ENCODE measurements at regions of chr15 and their contacts with region 1.

Region 1: DNA sequence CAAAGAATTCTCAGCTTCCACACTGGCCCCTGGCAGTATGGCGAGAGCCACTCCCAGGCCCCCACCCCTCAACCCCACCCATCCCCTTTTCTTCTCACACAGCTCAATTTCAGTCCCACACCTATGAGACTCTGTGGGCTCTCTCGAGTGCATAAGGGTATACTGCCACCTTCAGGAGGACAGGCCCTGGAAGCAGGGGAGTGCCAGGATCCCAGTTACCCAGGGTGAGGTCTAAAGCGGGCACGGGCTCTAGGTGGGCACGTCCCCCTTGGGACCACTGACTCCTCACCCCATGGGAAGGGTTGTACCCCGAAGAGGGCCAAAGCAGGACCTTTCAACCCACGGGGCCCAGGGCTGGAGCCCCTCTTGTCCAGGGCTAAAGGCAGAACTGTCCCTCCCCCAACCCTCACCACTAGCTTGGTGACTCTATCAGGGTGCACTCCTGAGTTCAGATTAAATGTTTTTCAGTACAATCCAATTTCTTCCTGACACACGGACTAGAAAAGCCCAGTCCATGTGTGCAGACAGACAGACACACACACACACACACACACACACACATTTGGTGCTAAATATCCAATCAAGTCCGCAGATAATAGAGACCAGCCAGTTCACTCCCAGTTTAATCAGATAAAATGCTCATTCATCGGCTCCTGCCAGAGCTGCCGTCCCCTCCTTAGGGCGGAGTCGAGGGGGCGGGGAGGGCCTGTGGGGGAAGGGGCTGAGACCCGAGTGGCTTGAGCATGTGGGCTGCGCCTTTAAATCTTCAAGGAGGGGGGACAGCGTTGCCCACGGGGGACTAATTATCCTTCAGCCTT is 59.4 kb downstream of the CYP11A1 start:
- DNase-seq: peak; percentile 61 to 83
- ATAC-seq: peak; percentile 88 to 94
- H3K4me3 ChIP-seq: no peak overlapping the region
- H3K27ac ChIP-seq: peak overlapping the region in 1 of 2 experiments; percentile 62; a peak in 2 of 6 replicates
- H3K4me1 ChIP-seq: peaks cover 18% of the 10 kb centered on the region
- CTCF ChIP-seq: peak; percentile 67
- EP300 ChIP-seq: no peak
- POLR2A ChIP-seq: no peak
- RAD21 ChIP-seq: peak; percentile 85 to 87

Region 2: GRCh38 chr15:74127260-74127953 is 180.6 kb before region 1 on chr15:
- CTCF ChIA-PET with region 1: interaction called, 38 read pairs
- POLR2A ChIA-PET with region 1: no interaction called
- DNase-seq: peak; percentile 52 to 86
- ATAC-seq: peak; percentile 88 to 96
- H3K4me3 ChIP-seq: peak overlapping the region; percentile 50
- H3K27ac ChIP-seq: peak overlapping the region; percentile 64 to 85
- H3K4me1 ChIP-seq: peaks cover 20% of the 10 kb centered on the region; the same call in 2 of the 3 replicates
- CTCF ChIP-seq: peak; percentile 93
- EP300 ChIP-seq: no peak
- POLR2A ChIP-seq: no peak
- RAD21 ChIP-seq: peak; percentile 96 to 98

Region 3: GRCh38 chr15:74196179-74196590 is 111.9 kb before region 1 on chr15:
- CTCF ChIA-PET with region 1: interaction called, 33 read pairs
- POLR2A ChIA-PET with region 1: interaction called, 3 read pairs
- DNase-seq: peak; percentile 55 to 94
- ATAC-seq: peak; percentile 73 to 82
- H3K4me3 ChIP-seq: no peak overlapping the region
- H3K27ac ChIP-seq: peak overlapping the region; percentile 90 to 97
- H3K4me1 ChIP-seq: peaks cover 95% of the 10 kb centered on the region
- CTCF ChIP-seq: no peak
- EP300 ChIP-seq: peak; percentile 62 to 84; a peak in 3 of 5 replicates
- POLR2A ChIP-seq: no peak
- RAD21 ChIP-seq: peak in 1 of 2 experiments; percentile 22; a peak in 3 of 5 replicates

Region 4: GRCh38 chr15:74240002-74240568 is 68.0 kb before region 1 on chr15:
- CTCF ChIA-PET with region 1: interaction called, 14 read pairs
- POLR2A ChIA-PET with region 1: interaction called, 3 read pairs
- DNase-seq: peak; percentile 72 to 93
- ATAC-seq: peak; percentile 90 to 97
- H3K4me3 ChIP-seq: no peak overlapping the region
- H3K27ac ChIP-seq: peak overlapping the region; percentile 79 to 85
- H3K4me1 ChIP-seq: peaks cover 51% of the 10 kb centered on the region
- CTCF ChIP-seq: peak; percentile 38; the same call in 2 of the 3 replicates
- EP300 ChIP-seq: no peak; a peak in 1 of 5 replicates
- POLR2A ChIP-seq: no peak
- RAD21 ChIP-seq: peak; percentile 21 to 49; a peak in 4 of 5 replicates

Region 5: GRCh38 chr15:74291101-74292071 is 16.6 kb before region 1 on chr15:
- CTCF ChIA-PET with region 1: interaction called, 24 read pairs
- POLR2A ChIA-PET with region 1: no interaction called
- DNase-seq: peak; percentile 35 to 56
- ATAC-seq: peak; percentile 67 to 86; a peak in 4 of 6 replicates
- H3K4me3 ChIP-seq: no peak overlapping the region
- H3K27ac ChIP-seq: no peak overlapping the region
- H3K4me1 ChIP-seq: no peaks in the 10 kb centered on the region
- CTCF ChIP-seq: no peak
- EP300 ChIP-seq: no peak
- POLR2A ChIP-seq: no peak
- RAD21 ChIP-seq: no peak

Region 6: GRCh38 chr15:74396445-74397238 is 88.6 kb after region 1 on chr15:
- CTCF ChIA-PET with region 1: no interaction called
- POLR2A ChIA-PET with region 1: no interaction called
- DNase-seq: peak; percentile 61 to 69
- ATAC-seq: peak; percentile 74 to 83
- H3K4me3 ChIP-seq: no peak overlapping the region
- H3K27ac ChIP-seq: peak overlapping the region; percentile 47 to 80; a peak in 5 of 6 replicates
- H3K4me1 ChIP-seq: peaks cover 22% of the 10 kb centered on the region
- CTCF ChIP-seq: no peak
- EP300 ChIP-seq: no peak
- POLR2A ChIP-seq: no peak
- RAD21 ChIP-seq: no peak